ENCODE measurements at regions of chr17 and their contacts with region 1.

Region 1: GRCh38 chr17:46832945-46833839 is 14.7 kb upstream of the WNT3 start:
- DNase-seq: no peak
- ATAC-seq: no peak
- H3K4me3 Mint-ChIP-seq: no peak overlapping the region
- H3K27ac Mint-ChIP-seq: no peak overlapping the region
- H3K4me1 Mint-ChIP-seq: peaks cover 2% of the 10 kb centered on the region
- H3K27me3 Mint-ChIP-seq: peaks cover 16% of the 10 kb centered on the region
- CTCF ChIP-seq: no peak

Region 2: DNA sequence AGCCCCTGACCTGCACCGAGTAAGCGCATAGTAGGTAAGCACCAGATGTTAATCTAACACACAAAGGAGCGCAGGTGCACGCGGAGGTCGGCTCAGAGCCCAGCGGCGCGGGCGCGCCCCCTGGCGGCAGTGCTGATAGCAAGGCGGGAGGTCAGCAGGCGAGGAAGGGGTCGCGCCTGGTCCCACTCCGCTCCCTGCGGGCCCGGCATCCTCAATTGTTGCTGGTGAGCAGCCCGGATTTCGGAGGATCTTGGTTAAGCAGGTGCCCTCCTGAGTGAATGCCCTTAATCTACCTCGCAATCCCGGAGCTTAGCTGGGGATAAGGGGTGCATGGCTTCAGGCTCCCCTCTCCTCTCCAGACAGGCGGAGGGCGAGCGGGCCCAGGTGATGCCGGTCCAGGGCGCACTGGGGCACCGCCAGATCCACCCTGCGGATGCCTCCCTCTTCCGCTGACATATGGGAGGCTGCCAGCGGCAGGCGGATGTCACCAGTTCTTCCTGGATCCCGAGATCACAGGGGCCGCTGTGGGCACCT is 10.7 kb before region 1 on chr17:
- CTCF ChIA-PET with region 1: interaction called, 23 read pairs
- POLR2A ChIA-PET with region 1: no interaction called
- intact Hi-C with region 1: no loop called
- DNase-seq: peak; percentile 60
- ATAC-seq: no peak
- H3K4me3 Mint-ChIP-seq: no peak overlapping the region
- H3K27ac Mint-ChIP-seq: no peak overlapping the region
- H3K4me1 Mint-ChIP-seq: peaks cover 13% of the 10 kb centered on the region
- H3K27me3 Mint-ChIP-seq: peaks cover 43% of the 10 kb centered on the region
- CTCF ChIP-seq: peak; percentile 97

Region 3: DNA sequence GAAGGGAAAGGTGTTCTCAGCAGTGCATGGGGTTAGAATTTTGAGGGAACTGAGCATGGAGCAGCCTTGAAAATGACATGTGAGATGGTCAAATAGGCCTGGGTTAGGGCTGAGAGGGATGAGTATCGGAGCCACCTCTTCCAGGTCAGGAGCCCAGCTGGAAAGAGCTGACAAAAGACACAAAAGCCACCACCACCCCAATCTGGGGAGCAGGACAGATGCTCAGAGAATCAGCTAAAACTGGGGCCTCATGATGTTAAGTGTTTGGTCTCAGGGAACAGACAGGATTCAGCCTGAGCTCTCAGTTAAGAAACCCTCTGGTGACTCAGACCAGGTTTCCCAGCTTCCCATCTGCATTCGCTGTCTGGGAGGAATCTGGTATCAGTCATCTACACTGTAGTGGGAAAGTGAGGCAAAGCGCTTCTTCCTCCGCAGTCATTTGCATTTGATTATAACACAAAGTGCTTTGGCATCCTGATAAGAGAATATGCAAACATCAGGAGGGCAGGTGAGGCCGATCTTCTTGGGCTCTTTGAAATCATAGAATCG is 20.8 kb after region 1 on chr17:
- CTCF ChIA-PET with region 1: interaction called, 11 read pairs
- POLR2A ChIA-PET with region 1: no interaction called
- intact Hi-C with region 1: no loop called
- DNase-seq: no peak
- ATAC-seq: no peak
- H3K4me3 Mint-ChIP-seq: no peak overlapping the region
- H3K27ac Mint-ChIP-seq: no peak overlapping the region
- H3K4me1 Mint-ChIP-seq: peaks cover 6% of the 10 kb centered on the region
- H3K27me3 Mint-ChIP-seq: peaks cover 50% of the 10 kb centered on the region
- CTCF ChIP-seq: no peak

Region 4: GRCh38 chr17:46882666-46883065 is 49.5 kb after region 1 on chr17:
- CTCF ChIA-PET with region 1: no interaction called
- POLR2A ChIA-PET with region 1: no interaction called
- intact Hi-C with region 1: no loop called
- DNase-seq: no peak
- ATAC-seq: no peak
- H3K4me3 Mint-ChIP-seq: no peak overlapping the region
- H3K27ac Mint-ChIP-seq: no peak overlapping the region
- H3K4me1 Mint-ChIP-seq: peaks cover 2% of the 10 kb centered on the region
- H3K27me3 Mint-ChIP-seq: no peaks in the 10 kb centered on the region
- CTCF ChIP-seq: no peak

Measured in activated CD8-positive, alpha-beta T cell treated with anti-CD3 and anti-CD28 coated beads for 36 hours (primary cell).